Activated CD8-positive, alpha-beta memory T cell treated with anti-CD3 and anti-CD28 coated beads, Interleukin-2, amount 10 ng/mL, durations not matched to agents 7 days and 5 days (primary cell): ENCODE measurements at regions of chr1 and their contacts with region 1.

Region 1: DNA sequence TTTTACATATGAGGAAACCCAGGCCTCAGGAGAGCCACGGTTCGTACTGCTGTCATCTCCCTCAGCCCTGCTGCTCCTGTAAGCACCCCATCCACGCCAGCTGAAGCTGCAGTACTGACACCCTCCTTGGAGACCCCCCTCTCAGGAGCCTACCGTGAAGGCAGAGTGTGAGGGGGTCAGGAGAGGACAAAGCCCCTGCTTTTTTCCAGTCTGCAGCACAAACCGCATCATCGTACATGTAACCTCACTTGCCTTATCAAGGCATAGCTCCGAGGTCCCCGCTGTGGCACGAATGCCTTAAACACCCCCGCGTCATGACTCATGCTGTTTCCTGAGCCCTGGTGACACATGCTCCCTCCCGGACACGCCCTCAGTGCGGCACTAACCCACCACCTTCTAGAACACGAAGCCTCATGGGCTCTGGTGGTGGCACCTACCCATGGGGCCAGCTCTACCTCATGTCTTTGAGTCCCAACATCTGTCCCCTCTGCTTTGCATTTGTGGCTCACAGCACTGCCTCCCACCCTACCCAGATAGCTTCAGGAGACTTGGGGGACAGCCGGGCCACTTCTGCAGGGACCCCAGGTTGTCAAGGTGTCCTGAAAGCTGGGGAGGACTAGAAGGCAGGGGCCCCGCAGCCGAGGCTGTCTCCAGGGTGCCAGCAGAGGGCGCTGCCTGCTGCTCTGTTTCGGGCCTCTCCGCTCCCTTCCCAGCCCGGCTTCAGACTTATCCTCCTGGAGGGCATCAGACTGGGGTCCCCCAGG is 4.9 kb downstream of the SH3BGRL3 start:
- DNase-seq: peak; percentile 99
- ATAC-seq: peak; percentile 71
- H3K4me3 Mint-ChIP-seq: peak overlapping the region; percentile 69
- H3K27ac Mint-ChIP-seq: peak overlapping the region; percentile 99
- H3K4me1 Mint-ChIP-seq: peaks cover 89% of the 10 kb centered on the region
- H3K27me3 Mint-ChIP-seq: no peaks in the 10 kb centered on the region

Region 2: DNA sequence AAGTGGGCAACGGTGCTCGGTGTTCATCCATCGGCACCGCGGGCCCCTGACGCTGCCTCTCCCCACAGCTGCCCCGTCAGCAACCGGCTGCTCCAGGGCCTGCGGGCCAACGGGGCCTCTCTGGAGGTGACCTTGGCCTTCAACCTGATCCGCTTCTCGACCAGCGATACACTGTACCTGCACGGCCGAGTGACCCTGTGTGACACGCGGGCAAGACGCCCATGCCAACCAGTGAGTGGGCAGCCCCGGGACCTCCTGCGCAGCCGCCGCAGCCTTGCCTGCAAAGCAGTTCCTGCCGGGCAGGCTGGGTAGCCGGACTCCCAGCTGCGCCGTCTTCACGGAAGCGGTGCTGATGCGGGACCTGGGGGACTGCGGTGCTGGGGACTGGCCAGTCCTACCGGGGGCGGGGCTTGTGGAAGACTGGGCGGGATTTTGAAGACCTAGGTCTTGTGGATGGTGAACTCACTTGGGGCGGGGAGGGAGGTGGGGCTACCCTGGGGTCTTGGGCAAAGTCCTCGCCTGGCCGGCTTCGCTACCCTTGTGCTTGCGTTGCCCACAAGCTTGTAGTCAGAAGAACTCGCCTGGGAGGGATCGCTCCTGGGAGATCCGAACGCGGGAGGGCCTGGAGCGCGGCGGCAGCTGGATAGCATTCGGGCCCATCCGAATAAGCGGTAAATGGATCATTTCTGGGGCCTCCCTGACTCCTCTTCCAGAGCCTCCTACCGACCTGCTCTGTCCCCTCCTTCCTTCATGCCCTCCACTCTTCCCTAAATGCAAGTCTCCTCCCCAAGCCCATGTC is 59.5 kb before region 1 on chr1:
- CTCF ChIA-PET with region 1: no interaction called
- DNase-seq: peak; percentile 71
- ATAC-seq: peak; percentile 92
- H3K4me3 Mint-ChIP-seq: peak overlapping the region; percentile 51
- H3K27ac Mint-ChIP-seq: no peak overlapping the region
- H3K4me1 Mint-ChIP-seq: peaks cover 13% of the 10 kb centered on the region
- H3K27me3 Mint-ChIP-seq: peaks cover 45% of the 10 kb centered on the region

Region 3: GRCh38 chr1:26254404-26254803 is 30.4 kb before region 1 on chr1:
- CTCF ChIA-PET with region 1: no interaction called
- DNase-seq: no peak
- ATAC-seq: no peak
- H3K4me3 Mint-ChIP-seq: no peak overlapping the region
- H3K27ac Mint-ChIP-seq: no peak overlapping the region
- H3K4me1 Mint-ChIP-seq: peaks cover 10% of the 10 kb centered on the region
- H3K27me3 Mint-ChIP-seq: no peaks in the 10 kb centered on the region

Region 4: DNA sequence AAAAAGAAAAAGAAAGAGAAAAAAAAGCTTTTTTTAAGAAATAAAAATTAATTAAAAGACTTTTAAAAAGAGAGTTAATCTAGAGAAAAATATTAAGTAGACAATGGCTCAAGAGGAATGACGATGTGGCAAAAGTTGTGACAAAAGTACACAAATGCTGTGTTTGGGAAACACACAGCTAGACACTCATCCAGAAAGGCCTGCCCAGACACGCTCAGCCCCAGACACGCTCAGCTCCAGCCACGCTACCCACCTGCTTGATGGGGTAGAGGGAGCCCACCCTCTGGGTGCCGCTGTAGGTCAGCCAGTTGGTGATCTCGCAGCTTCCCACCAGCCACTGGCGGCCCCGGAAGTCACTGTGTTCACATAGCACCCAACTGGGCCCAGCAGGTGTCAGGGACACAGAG is 43.2 kb after region 1 on chr1:
- CTCF ChIA-PET with region 1: interaction called, 1,010 read pairs
- DNase-seq: no peak
- ATAC-seq: no peak
- H3K4me3 Mint-ChIP-seq: no peak overlapping the region
- H3K27ac Mint-ChIP-seq: no peak overlapping the region
- H3K4me1 Mint-ChIP-seq: peaks cover 6% of the 10 kb centered on the region
- H3K27me3 Mint-ChIP-seq: no peaks in the 10 kb centered on the region

Region 5: GRCh38 chr1:26363549-26364448 is 79.0 kb after region 1 on chr1:
- CTCF ChIA-PET with region 1: interaction called, 114 read pairs
- DNase-seq: peak; percentile 90
- ATAC-seq: peak; percentile 76
- H3K4me3 Mint-ChIP-seq: peak overlapping the region; percentile 7
- H3K27ac Mint-ChIP-seq: peak overlapping the region; percentile 72
- H3K4me1 Mint-ChIP-seq: peaks cover 53% of the 10 kb centered on the region
- H3K27me3 Mint-ChIP-seq: peaks cover 23% of the 10 kb centered on the region

Region 6: GRCh38 chr1:26372039-26372438 is 87.3 kb after region 1 on chr1:
- CTCF ChIA-PET with region 1: interaction called, 100 read pairs
- DNase-seq: no peak
- ATAC-seq: no peak
- H3K4me3 Mint-ChIP-seq: no peak overlapping the region
- H3K27ac Mint-ChIP-seq: peak overlapping the region; percentile 82
- H3K4me1 Mint-ChIP-seq: peaks cover 74% of the 10 kb centered on the region
- H3K27me3 Mint-ChIP-seq: no peaks in the 10 kb centered on the region

Region 7: GRCh38 chr1:26378088-26378878 is 93.5 kb after region 1 on chr1:
- CTCF ChIA-PET with region 1: interaction called, 100 read pairs
- DNase-seq: peak; percentile 96
- ATAC-seq: peak; percentile 96
- H3K4me3 Mint-ChIP-seq: peak overlapping the region; percentile 29
- H3K27ac Mint-ChIP-seq: peak overlapping the region; percentile 87
- H3K4me1 Mint-ChIP-seq: peaks cover 75% of the 10 kb centered on the region
- H3K27me3 Mint-ChIP-seq: peaks cover 2% of the 10 kb centered on the region

Region 8: DNA sequence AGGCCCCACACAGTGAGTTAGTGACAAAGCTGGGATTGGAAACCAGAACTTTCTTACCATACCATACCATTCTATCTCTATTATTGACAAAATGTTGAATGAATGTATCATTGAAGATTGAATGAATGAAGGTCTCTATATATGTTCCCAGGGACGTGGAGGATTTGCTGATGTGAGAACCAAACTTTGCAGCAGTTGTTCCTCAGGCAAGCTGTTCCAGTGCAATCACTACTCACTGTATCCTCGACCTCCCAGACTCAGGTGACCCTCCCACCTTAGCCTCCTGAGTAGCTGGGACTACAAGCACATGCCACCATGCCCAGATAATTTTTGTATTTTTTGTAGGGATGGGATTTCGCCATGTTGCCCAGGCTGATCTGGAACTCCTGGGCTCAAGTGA is 114.3 kb after region 1 on chr1:
- CTCF ChIA-PET with region 1: interaction called, 62 read pairs
- DNase-seq: no peak
- ATAC-seq: no peak
- H3K4me3 Mint-ChIP-seq: no peak overlapping the region
- H3K27ac Mint-ChIP-seq: no peak overlapping the region
- H3K4me1 Mint-ChIP-seq: peaks cover 5% of the 10 kb centered on the region
- H3K27me3 Mint-ChIP-seq: peaks cover 20% of the 10 kb centered on the region